GM10248 (cell line): ENCODE measurements at regions of chr1 and their contacts with region 1.

Region 1: DNA sequence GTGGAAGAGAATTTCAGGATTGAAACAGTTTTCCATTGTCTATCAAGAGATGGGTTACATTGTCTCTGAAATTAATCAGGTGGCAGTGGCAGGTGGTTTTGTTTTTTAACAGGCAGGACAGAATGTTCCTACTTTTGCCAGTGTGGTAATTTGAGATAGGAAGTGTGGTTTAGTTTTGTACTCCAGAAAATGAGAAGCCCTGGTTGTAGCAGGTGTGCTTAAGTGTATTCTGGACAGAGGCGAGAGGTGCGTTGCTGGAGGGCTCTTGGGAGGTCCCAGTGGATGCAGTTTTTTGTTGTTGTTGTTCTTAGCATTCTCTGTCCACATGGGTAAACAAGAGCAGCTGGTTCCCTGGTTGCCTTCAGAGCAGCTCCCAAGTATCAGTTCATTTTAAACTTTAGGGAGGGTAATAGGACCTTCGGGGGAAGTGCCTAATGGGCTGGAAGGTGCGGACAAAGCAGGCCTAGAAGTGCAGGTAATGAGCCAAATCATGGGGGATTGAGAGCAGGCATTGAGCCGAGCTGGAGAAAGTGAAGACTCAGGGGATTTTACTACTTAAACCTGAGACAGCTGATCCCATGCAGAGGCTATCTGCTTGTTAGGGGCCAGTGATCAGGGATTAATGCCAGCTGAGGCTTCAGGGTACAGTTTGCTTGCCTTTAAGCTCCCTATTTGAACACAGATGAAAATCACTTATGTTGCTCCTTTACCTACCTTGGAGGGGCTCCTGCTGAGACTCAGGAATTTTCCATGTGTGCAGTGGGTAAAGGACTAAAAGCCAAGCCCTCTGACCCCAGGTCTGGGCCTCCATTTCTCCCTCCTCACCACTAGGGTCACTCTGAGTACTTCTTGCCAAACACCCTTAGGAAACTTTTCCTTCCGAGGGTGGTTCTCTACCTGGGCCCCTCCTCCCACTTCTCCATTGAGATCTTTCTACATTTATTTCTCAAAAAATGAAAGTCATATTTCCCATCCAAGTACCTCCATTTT is 6.1 kb downstream of the PFKFB2 start:
- DNase-seq: no peak
- CTCF ChIP-seq: no peak

Region 2: DNA sequence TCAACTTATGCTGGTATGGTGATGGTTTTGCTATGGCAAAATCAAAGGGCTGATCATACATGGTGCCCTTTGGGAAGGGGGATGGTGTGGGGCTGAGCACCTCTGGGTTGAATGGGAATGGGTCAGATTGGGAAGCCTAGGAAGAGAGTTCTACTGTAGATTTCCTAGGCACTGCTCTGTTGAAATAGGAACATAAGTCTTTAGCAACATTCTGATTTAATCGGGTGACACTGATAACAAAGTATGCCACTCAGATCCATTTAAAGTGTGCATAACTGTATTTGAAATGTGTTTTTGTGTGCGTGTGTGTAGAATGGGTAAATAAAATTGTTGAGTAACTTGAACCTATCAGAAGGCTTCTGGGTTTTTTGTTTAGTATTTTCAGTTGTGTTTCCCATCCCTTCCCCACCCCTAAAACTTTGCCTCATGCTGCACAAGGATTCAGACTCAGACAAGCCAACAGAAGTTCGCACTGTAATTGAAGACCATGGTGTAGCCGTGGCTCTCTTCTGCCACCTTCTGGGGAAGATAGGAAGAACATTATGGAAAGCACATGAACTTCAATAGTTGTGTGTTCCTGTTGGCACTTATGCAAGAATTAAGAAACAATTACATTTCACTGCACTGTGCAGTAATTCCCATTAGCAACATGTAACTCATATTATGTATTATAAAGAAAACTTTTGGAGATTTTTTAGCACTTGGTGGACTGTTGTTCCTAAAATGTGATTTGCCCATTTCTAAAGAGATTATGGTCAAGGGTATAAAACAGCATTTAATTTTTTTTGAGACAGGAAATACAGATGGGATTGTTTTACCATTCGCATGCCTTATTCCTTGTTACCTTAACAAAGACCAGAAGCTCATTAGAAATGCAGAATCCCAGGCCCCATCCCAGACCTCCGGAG is 18.6 kb after region 1 on chr1:
- CTCF ChIA-PET with region 1: interaction called, 13 read pairs
- POLR2A ChIA-PET with region 1: no interaction called
- DNase-seq: peak; percentile 66
- CTCF ChIP-seq: peak; percentile 86

Region 3: GRCh38 chr1:207191776-207192175 is 132.6 kb after region 1 on chr1:
- CTCF ChIA-PET with region 1: no interaction called
- POLR2A ChIA-PET with region 1: no interaction called
- DNase-seq: no peak
- CTCF ChIP-seq: no peak